Activated CD8-positive, alpha-beta T cell treated with anti-CD3 and anti-CD28 coated beads for 36 hours (primary cell): ENCODE measurements at regions of chr1 and their contacts with region 1.

Region 1: GRCh38 chr1:211323156-211324063 is 3.2 kb upstream of the TRAF5 start:
- DNase-seq: peak; percentile 86
- ATAC-seq: peak; percentile 77
- H3K4me3 Mint-ChIP-seq: no peak overlapping the region
- H3K27ac Mint-ChIP-seq: peak overlapping the region; percentile 58
- H3K4me1 Mint-ChIP-seq: peaks cover 61% of the 10 kb centered on the region
- H3K27me3 Mint-ChIP-seq: no peaks in the 10 kb centered on the region
- CTCF ChIP-seq: peak; percentile 81

Region 2: DNA sequence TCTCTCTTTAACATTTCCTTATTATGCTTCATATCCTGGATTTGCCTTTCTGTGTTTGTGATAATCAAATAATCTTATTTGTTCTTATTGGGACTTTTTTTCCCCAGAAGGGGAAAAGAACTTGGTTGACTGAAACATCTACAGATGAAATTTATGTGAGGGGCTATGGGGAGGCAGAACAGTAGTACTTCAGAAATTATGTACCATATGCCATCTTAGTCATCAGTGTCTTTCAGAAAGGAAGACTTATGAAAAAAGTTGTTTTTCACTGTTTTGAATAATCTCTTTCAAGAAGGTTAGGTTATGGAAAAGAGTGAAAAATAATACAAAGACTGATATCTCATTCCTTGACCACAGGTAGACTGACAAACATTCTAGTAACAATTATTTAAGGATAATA is 27.0 kb before region 1 on chr1:
- CTCF ChIA-PET with region 1: interaction called, 15 read pairs
- POLR2A ChIA-PET with region 1: no interaction called
- intact Hi-C with region 1: no loop called
- DNase-seq: no peak
- ATAC-seq: peak; percentile 65
- H3K4me3 Mint-ChIP-seq: no peak overlapping the region
- H3K27ac Mint-ChIP-seq: peak overlapping the region; percentile 84
- H3K4me1 Mint-ChIP-seq: peaks cover 33% of the 10 kb centered on the region
- H3K27me3 Mint-ChIP-seq: no peaks in the 10 kb centered on the region
- CTCF ChIP-seq: no peak

Region 3: GRCh38 chr1:211313392-211313791 is 10.0 kb before region 1 on chr1:
- CTCF ChIA-PET with region 1: interaction called, 11 read pairs
- POLR2A ChIA-PET with region 1: no interaction called
- intact Hi-C with region 1: no loop called
- DNase-seq: no peak
- ATAC-seq: no peak
- H3K4me3 Mint-ChIP-seq: no peak overlapping the region
- H3K27ac Mint-ChIP-seq: peak overlapping the region; percentile 27
- H3K4me1 Mint-ChIP-seq: peaks cover 7% of the 10 kb centered on the region
- H3K27me3 Mint-ChIP-seq: no peaks in the 10 kb centered on the region
- CTCF ChIP-seq: no peak

Region 4: GRCh38 chr1:211352985-211353515 is 29.6 kb after region 1 on chr1:
- CTCF ChIA-PET with region 1: interaction called, 23 read pairs
- POLR2A ChIA-PET with region 1: interaction called, 6 read pairs
- intact Hi-C with region 1: no loop called
- DNase-seq: peak; percentile 74
- ATAC-seq: peak; percentile 69
- H3K4me3 Mint-ChIP-seq: peak overlapping the region; percentile 9
- H3K27ac Mint-ChIP-seq: peak overlapping the region; percentile 58
- H3K4me1 Mint-ChIP-seq: peaks cover 79% of the 10 kb centered on the region
- H3K27me3 Mint-ChIP-seq: no peaks in the 10 kb centered on the region
- CTCF ChIP-seq: peak; percentile 71

Region 5: GRCh38 chr1:211469938-211470529 is 146.6 kb after region 1 on chr1:
- CTCF ChIA-PET with region 1: interaction called, 11 read pairs
- POLR2A ChIA-PET with region 1: no interaction called
- intact Hi-C with region 1: no loop called
- DNase-seq: peak; percentile 63
- ATAC-seq: peak; percentile 49
- H3K4me3 Mint-ChIP-seq: no peak overlapping the region
- H3K27ac Mint-ChIP-seq: no peak overlapping the region
- H3K4me1 Mint-ChIP-seq: no peaks in the 10 kb centered on the region
- H3K27me3 Mint-ChIP-seq: peaks cover 1% of the 10 kb centered on the region
- CTCF ChIP-seq: peak; percentile 83

Region 6: GRCh38 chr1:211514030-211514754 is 190.8 kb after region 1 on chr1:
- CTCF ChIA-PET with region 1: interaction called, 27 read pairs
- POLR2A ChIA-PET with region 1: interaction called, 4 read pairs
- intact Hi-C with region 1: loop called (anchors 10 kb)
- DNase-seq: peak; percentile 88
- ATAC-seq: peak; percentile 76
- H3K4me3 Mint-ChIP-seq: peak overlapping the region; percentile 42
- H3K27ac Mint-ChIP-seq: peak overlapping the region; percentile 33
- H3K4me1 Mint-ChIP-seq: peaks cover 24% of the 10 kb centered on the region
- H3K27me3 Mint-ChIP-seq: peaks cover 2% of the 10 kb centered on the region
- CTCF ChIP-seq: peak; percentile 77

Region 7: GRCh38 chr1:211654838-211655787 is 331.7 kb after region 1 on chr1:
- CTCF ChIA-PET with region 1: interaction called, 11 read pairs
- POLR2A ChIA-PET with region 1: interaction called, 3 read pairs
- intact Hi-C with region 1: loop called (anchors 10 kb)
- DNase-seq: peak; percentile 92
- ATAC-seq: peak; percentile 97
- H3K4me3 Mint-ChIP-seq: no peak overlapping the region
- H3K27ac Mint-ChIP-seq: no peak overlapping the region
- H3K4me1 Mint-ChIP-seq: no peaks in the 10 kb centered on the region
- H3K27me3 Mint-ChIP-seq: no peaks in the 10 kb centered on the region
- CTCF ChIP-seq: peak; percentile 98